Activated CD8-positive, alpha-beta T cell treated with anti-CD3 and anti-CD28 coated beads, Interleukin-2, amount 10 ng/mL, durations not matched to agents 7 days and 5 days (primary cell): ENCODE measurements at regions of chr12 and their contacts with region 1.

Region 1: DNA sequence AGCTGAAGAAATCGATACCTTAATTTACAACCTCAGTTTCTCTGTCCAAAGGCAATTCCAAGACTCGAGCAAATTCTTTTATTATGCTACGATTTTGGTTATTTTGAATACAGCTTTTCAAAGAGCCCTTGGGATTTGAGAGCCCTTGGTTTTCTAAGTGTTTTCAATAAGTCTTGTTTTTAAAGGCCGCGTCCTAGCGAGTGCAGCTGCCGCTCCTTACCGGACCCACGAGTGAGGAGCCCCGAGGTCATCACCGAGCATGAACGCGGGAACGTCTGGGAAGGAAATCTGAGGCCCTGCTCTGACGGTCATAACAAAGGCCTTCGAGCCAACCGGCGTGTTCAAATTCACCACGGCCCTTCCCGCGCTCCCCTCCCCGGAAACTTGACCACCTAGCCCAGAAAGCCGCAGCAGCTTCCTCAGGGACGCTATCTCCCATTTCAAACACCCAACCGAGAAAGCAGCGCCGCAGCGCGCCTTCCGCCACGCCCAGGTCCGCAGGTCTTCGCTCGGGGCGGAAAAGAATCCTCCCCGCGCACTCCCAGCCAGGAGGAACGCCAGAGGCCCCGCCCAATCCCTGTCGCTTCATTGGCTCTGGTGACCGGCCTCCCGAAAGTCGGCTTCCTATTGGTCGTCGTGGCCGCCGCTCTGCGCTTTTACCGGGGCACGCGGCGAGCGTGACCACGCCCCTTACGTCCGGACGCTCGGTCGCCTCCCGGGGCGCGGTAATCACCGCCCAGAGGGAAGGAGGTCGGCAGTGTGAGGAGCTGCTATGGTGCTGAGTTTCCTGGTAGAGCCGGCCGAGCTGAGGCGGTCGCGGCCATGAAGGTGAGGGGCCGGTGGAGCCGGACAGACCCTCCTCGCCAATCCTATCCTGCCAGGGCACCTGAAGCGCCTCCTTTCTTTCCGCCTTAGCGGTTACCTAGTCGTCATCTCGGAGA is at the start of gene RNF34:
- DNase-seq: peak; percentile 99
- ATAC-seq: peak; percentile 95
- H3K4me3 Mint-ChIP-seq: peak within 1 kb of the TSS; percentile 89
- H3K27ac Mint-ChIP-seq: peak within 1 kb of the TSS; percentile 91
- H3K4me1 Mint-ChIP-seq: peaks cover 28% of the 10 kb centered on the region
- H3K27me3 Mint-ChIP-seq: no peaks in the 10 kb centered on the region
- total RNA-seq, gene RNF34: 74.9 to 85.0 TPM

Region 2: DNA sequence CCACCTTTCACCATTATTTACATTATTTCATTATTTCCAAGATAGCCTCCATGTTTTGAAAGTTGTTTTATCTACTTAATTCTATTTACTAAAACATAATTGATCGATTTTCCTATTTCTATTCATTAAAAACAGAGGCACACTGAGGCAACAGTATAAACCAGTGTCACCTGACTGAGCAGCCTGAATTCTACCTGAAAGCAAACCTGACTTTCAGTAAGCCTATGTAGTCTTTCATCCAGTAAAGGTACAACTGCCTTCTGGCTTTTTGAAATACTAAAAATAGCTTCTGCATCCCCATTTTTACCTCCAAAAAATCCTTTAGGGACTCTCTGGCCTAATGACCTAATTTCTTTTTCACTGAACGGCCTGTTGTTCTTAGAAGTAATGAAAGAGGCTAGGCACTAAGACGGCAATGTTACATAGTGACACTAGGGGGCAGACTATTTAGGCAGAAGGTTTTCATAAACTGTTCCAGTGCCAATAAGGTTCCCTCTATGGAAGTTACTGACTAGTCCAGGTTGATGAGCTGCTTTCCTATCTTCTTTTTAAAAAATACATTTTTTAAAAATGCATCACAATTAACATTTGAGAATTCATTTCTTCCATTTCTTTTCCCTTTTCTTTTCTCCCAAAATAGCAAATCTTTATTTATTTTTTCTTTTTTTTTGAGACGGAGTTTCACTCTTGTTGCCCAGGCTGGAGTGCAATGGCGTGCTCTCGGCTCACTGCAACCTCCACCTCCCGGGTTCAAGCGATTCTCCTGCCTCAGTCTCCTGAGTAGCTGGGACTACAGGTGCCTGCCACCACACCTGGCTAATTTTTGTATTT is 64.9 kb before region 1 on chr12:
- CTCF ChIA-PET with region 1: interaction called, 31 read pairs
- POLR2A ChIA-PET with region 1: interaction called, 10 read pairs
- DNase-seq: peak; percentile 42
- ATAC-seq: peak; percentile 76
- H3K4me3 Mint-ChIP-seq: no peak overlapping the region
- H3K27ac Mint-ChIP-seq: no peak overlapping the region
- H3K4me1 Mint-ChIP-seq: peaks cover 5% of the 10 kb centered on the region
- H3K27me3 Mint-ChIP-seq: no peaks in the 10 kb centered on the region

Region 3: GRCh38 chr12:121351820-121352681 is 47.6 kb before region 1 on chr12 and contains the start of gene ANAPC5:
- CTCF ChIA-PET with region 1: interaction called, 15 read pairs
- POLR2A ChIA-PET with region 1: interaction called, 41 read pairs
- DNase-seq: peak; percentile 95
- ATAC-seq: peak; percentile 98
- H3K4me3 Mint-ChIP-seq: peak within 1 kb of the TSS; percentile 87
- H3K27ac Mint-ChIP-seq: peak within 1 kb of the TSS; percentile 97
- H3K4me1 Mint-ChIP-seq: peaks cover 22% of the 10 kb centered on the region
- H3K27me3 Mint-ChIP-seq: peaks cover under 1% of the 10 kb centered on the region
- total RNA-seq, gene ANAPC5: 135 to 147 TPM

Region 4: GRCh38 chr12:121383601-121384021 is 16.1 kb before region 1 on chr12:
- CTCF ChIA-PET with region 1: interaction called, 3 read pairs
- POLR2A ChIA-PET with region 1: interaction called, 10 read pairs
- DNase-seq: no peak
- ATAC-seq: no peak
- H3K4me3 Mint-ChIP-seq: no peak overlapping the region
- H3K27ac Mint-ChIP-seq: no peak overlapping the region
- H3K4me1 Mint-ChIP-seq: peaks cover 4% of the 10 kb centered on the region
- H3K27me3 Mint-ChIP-seq: peaks cover 8% of the 10 kb centered on the region

Region 5: DNA sequence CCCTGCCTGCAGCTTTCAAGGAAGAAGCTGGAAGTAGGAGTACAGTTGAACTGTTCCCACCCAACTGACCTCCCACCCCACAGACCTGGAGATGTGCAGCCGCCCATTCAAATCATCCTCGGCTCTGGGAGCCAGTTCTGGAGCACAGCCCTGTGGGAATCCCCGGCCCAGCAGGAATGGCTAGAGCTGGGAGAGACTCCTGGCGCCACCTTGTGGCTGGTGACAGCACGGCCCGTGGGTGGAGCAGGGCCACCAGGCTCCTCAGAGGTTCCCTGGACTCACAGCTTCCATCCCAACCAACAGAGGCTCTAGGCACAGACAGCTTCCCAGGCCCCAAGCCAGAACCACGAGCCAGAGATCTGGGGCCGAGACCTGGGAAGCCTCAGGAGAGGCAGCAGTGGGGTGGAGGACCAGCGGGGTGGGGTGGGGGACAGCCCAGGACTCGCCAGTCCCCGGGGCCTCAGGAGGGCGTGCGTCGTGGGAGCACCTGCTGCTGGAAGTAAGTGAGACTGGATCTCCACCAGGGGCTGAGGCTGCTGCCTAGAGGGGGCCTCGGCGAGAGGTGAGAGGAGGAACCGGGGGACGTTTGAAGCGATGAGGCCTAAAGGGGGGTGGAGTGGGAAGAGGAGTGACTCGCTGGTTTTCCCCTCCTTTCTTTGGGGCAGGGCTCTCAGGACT is 43.7 kb after region 1 on chr12:
- CTCF ChIA-PET with region 1: interaction called, 32 read pairs
- POLR2A ChIA-PET with region 1: interaction called, 4 read pairs
- DNase-seq: peak; percentile 68
- ATAC-seq: peak; percentile 84
- H3K4me3 Mint-ChIP-seq: no peak overlapping the region
- H3K27ac Mint-ChIP-seq: peak overlapping the region; percentile 43
- H3K4me1 Mint-ChIP-seq: peaks cover 1% of the 10 kb centered on the region
- H3K27me3 Mint-ChIP-seq: no peaks in the 10 kb centered on the region

Region 6: DNA sequence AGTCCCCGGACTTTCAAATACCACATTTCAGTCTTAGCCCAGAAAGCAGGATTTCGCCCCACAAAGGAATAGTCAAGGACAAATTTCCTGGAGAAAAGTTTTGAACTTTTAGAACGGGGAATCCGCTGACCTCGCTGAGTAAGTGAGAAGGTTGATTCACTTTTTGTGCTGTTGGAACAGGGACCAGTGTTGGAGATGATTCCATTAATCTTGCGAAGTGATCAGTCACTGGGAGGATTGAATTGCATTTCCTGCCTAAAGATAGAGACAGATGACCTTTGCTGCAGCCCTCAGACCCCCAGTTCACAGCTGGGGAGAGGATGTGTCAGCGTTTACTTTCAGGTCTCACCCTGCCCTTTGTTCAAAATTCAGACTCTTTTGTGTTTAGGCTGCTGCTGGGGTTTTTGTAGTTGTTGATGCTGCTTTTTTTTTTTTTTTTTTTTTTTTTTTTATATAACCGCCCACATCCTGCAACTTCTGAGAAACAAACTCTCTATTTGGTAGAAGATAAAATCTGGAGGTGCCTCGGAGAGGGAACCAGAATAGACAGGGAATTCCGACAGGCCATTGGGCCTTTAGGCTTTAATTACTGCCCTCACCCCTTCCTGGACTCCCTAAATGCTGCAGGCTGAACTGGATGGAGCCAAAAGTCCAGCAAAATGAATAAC is 190.9 kb after region 1 on chr12:
- CTCF ChIA-PET with region 1: no interaction called
- POLR2A ChIA-PET with region 1: no interaction called
- DNase-seq: peak; percentile 77
- ATAC-seq: peak; percentile 82
- H3K4me3 Mint-ChIP-seq: peak overlapping the region; percentile 75
- H3K27ac Mint-ChIP-seq: peak overlapping the region; percentile 98
- H3K4me1 Mint-ChIP-seq: peaks cover 40% of the 10 kb centered on the region
- H3K27me3 Mint-ChIP-seq: no peaks in the 10 kb centered on the region